Activated CD8-positive, alpha-beta memory T cell treated with anti-CD3 and anti-CD28 coated beads, Interleukin-2, amount 10 ng/mL, durations not matched to agents 7 days and 5 days (primary cell): ENCODE measurements at regions of chr9 and their contacts with region 1.

Region 1: GRCh38 chr9:137240861-137241489 is at the start of gene TUBB4B:
- DNase-seq: peak; percentile 99
- ATAC-seq: peak; percentile 75
- H3K4me3 Mint-ChIP-seq: peak within 1 kb of the TSS; percentile 82
- H3K27ac Mint-ChIP-seq: peak within 1 kb of the TSS; percentile 90
- H3K4me1 Mint-ChIP-seq: peaks cover 31% of the 10 kb centered on the region
- H3K27me3 Mint-ChIP-seq: no peaks in the 10 kb centered on the region
- total RNA-seq, gene TUBB4B: 353 to 375 TPM

Region 2: DNA sequence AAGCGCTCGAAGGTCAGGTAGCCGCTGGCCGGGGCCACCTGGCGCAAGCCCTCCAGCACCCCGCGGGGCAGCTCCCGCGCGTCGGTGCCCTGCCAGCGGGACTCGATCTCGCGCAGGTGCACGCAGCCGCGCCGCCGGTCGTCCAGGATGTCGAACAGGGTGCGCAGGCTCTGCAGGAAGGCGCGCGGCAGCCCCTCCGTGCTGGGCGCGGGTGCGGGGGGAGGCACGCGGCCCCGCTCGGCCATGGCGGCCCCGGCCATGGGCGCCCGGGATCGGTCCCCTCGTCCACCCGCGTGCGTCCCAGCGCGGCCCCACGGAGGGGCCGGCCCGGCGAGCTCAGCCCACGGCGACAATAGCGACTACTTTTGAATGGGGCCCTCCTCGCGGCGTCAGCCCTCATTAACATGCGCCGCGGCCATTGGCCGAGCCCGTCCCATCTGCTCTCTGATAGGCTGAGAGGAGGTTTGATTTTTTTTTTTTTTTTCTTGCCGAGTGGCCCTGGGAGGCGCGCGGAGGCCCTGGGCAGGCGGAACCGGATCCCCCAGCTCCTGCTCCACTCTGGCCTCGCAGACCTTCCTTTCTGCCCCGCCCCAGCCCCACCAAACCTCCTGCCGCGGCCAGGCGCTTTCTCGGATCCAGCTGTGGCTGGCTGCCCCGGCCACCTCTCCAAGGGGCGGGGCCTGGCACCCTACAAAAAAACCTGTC is 170.6 kb before region 1 on chr9 and contains the start of gene SAPCD2:
- CTCF ChIA-PET with region 1: interaction called, 15 read pairs
- DNase-seq: peak; percentile 93
- ATAC-seq: peak; percentile 91
- H3K4me3 Mint-ChIP-seq: peak within 1 kb of the TSS; percentile 78
- H3K27ac Mint-ChIP-seq: peak within 1 kb of the TSS; percentile 83
- H3K4me1 Mint-ChIP-seq: peaks cover 27% of the 10 kb centered on the region
- H3K27me3 Mint-ChIP-seq: no peaks in the 10 kb centered on the region
- total RNA-seq, gene SAPCD2: 31.9 to 40.1 TPM

Region 3: DNA sequence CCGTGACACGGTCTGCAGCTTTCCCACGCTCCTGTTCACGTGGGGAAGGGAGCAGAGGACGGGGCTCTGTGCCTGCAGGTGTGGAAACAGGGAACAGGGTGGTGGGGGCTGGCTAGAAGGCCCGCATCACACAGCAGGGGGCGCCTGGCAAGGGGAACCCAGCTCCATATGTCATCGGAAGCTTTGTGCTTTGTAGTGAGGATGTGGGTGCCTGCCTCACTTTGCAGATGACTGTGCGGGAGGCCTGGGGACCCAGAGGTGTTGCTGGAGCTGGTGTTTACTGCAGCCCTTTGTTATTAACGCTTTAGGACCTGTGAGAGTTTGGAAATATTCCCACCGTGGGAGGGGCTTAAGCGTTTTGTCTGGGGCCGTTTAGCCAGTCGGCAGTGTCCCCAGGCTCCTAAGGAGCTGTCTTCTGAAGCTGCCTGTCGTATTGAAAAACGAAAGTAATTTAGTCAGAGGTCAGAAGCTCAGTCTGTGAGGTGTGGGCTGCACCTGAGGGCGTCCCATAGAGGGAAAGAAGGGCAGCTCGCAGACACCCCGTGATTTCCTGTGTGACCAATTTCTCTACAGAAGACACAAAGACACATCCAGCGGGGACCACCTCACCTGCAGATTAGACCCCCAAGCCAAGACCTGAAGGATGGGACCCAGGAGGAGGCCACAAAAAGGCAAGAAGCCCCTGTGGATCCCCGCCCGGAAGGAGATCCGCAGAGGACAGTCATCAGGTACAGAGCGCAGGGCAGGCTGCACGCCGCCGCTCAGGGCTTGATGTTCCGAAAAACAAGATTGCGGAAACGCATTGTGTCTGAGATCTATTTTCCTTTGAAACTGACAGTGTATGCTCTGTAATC is 145.1 kb before region 1 on chr9:
- CTCF ChIA-PET with region 1: interaction called, 19 read pairs
- DNase-seq: peak; percentile 95
- ATAC-seq: peak; percentile 98
- H3K4me3 Mint-ChIP-seq: peak overlapping the region; percentile 85
- H3K27ac Mint-ChIP-seq: peak overlapping the region; percentile 97
- H3K4me1 Mint-ChIP-seq: peaks cover 30% of the 10 kb centered on the region
- H3K27me3 Mint-ChIP-seq: no peaks in the 10 kb centered on the region

Region 4: GRCh38 chr9:137129456-137130175 is 111.4 kb before region 1 on chr9:
- CTCF ChIA-PET with region 1: interaction called, 91 read pairs
- DNase-seq: peak; percentile 94
- ATAC-seq: peak; percentile 94
- H3K4me3 Mint-ChIP-seq: peak overlapping the region; percentile 83
- H3K27ac Mint-ChIP-seq: peak overlapping the region; percentile 81
- H3K4me1 Mint-ChIP-seq: peaks cover 28% of the 10 kb centered on the region
- H3K27me3 Mint-ChIP-seq: peaks cover 7% of the 10 kb centered on the region

Region 5: GRCh38 chr9:137200311-137201204 is 40.4 kb before region 1 on chr9 and contains the start of gene TPRN:
- CTCF ChIA-PET with region 1: interaction called, 12 read pairs
- DNase-seq: peak; percentile 100
- ATAC-seq: peak; percentile 95
- H3K4me3 Mint-ChIP-seq: peak within 1 kb of the TSS; percentile 85
- H3K27ac Mint-ChIP-seq: peak within 1 kb of the TSS; percentile 83
- H3K4me1 Mint-ChIP-seq: peaks cover 31% of the 10 kb centered on the region
- H3K27me3 Mint-ChIP-seq: no peaks in the 10 kb centered on the region
- total RNA-seq, gene TPRN: 11.1 to 13.3 TPM

Region 6: GRCh38 chr9:137254624-137255447 is 13.9 kb after region 1 on chr9 and contains the start of gene NELFB:
- CTCF ChIA-PET with region 1: interaction called, 46 read pairs
- DNase-seq: peak; percentile 96
- ATAC-seq: peak; percentile 86
- H3K4me3 Mint-ChIP-seq: peak within 1 kb of the TSS; percentile 91
- H3K27ac Mint-ChIP-seq: peak within 1 kb of the TSS; percentile 87
- H3K4me1 Mint-ChIP-seq: peaks cover 17% of the 10 kb centered on the region
- H3K27me3 Mint-ChIP-seq: no peaks in the 10 kb centered on the region
- total RNA-seq, gene NELFB: 70.8 to 75.3 TPM

Region 7: DNA sequence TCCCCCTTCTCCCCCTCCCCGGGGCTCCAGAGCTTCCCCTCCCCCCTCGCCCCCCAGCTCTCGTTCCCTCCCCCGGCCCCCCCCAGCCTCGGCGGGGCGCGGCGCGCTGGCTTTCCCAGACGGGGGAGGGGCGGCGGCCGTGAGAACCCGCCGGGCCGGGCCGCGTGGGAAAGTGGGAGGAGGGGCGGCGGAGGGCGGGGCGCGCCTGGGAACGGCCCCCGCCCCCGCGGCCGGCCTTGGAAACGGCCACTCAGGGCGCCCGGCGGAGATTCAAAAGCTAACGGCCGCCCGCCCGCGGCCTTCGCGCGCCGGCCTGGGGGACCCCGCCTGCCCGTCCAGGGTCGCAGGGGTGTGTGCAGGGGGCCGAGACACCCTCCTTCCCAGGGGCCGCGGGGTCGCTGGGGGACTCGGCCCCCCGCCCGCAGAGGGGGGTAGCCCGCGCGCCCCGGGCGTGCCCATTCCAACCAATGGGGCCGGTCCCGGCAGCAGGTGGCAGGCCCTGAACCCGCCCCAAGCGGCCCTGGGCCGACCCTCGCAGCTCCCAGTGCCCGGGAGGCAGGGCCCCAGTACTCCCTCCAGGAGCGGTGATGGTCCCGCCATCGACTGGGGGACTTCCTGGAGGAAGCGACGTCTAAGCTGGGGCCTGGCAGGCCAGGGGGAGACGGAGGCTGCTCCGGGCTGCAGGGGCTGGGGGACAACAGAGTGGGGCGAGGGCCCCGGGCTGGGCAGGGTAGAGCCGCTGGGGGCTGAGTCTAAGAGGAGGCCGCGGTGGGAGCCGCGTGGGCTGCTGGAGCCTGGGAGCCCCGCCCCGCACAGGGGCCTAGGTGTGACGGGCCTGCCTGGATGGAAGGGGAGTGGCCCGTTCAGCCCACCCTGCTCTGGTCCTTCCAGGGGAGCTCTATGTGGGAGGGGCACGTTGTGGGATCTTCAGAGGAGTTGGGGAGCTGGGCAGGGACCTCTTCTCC is 75.3 kb after region 1 on chr9:
- CTCF ChIA-PET with region 1: no interaction called
- DNase-seq: peak; percentile 47
- ATAC-seq: peak; percentile 46
- H3K4me3 Mint-ChIP-seq: peak overlapping the region; percentile 26
- H3K27ac Mint-ChIP-seq: no peak overlapping the region
- H3K4me1 Mint-ChIP-seq: peaks cover 7% of the 10 kb centered on the region
- H3K27me3 Mint-ChIP-seq: no peaks in the 10 kb centered on the region